Cardiac septum (tissue), 1 donor: ENCODE measurements at regions of chr6 and their contacts with region 1.

Region 1: DNA sequence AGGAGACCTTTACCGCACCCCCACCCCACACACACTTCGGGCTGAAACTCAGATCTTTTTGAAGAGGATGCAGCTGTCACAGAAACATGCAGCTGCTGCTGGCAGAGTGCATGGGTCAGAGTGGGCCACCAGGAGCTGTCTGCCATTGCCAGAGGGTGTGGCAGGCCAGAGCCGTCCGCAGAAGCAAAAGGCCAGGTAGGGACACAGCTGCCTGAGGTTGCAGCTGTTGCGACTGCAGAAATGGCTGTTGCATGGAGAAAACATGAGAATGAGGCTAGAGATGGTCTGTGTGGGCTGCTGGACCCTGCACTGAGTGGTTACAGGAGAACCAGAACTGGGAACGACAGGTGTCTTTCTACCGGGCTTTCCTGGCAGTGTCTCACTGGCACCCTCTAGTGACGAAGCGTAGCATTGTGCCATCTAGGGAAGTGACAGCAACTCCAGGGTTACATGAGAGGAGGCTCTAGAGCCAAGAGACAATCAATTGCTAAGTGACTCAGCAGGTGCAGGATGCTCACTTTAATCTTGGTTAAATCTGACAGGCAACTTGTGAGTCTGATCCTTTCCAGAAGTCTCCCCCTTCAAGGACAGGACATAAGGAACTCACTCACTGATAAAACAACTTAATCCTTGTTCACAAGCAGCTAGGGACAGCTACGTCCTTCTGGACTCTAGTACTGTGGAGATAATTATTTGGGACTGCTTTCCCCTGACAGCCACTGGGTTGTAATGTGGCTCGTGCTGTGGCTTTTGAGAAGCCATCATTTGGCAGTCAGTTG is 29.1 kb upstream of the SERPINB9 start:
- DNase-seq: peak; percentile 90

Region 2: GRCh38 chr6:2658788-2659187 is 273.4 kb before region 1 on chr6:
- intact Hi-C with region 1: no loop called
- DNase-seq: no peak

Region 3: GRCh38 chr6:2791124-2791974 is 140.8 kb before region 1 on chr6:
- intact Hi-C with region 1: loop called (anchors 5 kb)
- DNase-seq: peak; percentile 87

Region 4: GRCh38 chr6:2848851-2849250 is 83.3 kb before region 1 on chr6:
- intact Hi-C with region 1: loop called (anchors 1 kb)
- DNase-seq: no peak

Region 5: DNA sequence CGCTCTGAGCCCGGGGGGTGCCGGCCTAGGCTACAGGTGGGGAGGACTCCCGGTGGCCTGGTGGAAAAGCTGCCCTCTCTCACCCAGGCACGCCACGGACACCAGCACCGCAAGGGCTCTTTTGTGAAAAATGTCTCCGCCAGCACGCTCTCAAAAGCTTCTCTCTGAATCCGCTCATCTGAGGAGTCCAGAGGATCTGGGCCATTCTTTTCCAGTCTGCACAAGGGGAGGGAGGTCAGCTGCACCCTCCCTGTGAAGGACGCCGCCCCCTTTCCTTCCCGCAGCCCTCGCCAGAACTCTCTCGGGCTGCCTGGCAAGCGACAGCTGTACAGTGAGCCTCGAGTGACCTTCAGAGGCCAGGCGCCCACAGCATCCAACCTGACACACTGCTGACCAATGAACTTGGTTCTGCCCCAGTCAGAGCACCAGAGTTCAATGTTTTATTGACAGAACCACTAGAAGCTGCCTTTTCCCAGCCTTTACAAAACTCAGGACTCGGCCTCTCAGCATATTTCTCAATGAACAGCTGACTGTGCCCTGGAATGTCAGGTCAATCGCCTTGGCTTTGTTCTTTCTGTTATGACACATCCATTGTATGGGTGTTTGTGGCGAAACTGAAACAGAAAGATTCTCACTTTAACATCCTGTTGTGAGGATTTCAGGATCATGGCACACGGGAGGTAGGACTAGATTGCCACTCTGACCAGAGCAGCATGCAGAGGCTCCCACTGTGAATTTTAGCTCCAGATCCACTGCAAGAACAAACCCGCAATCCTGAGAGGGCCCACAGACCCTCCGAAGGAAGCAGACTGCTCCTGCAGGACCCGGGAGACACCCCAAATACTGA is 55.7 kb before region 1 on chr6:
- intact Hi-C with region 1: loop called (anchors 2 kb)
- DNase-seq: peak; percentile 84

Region 6: DNA sequence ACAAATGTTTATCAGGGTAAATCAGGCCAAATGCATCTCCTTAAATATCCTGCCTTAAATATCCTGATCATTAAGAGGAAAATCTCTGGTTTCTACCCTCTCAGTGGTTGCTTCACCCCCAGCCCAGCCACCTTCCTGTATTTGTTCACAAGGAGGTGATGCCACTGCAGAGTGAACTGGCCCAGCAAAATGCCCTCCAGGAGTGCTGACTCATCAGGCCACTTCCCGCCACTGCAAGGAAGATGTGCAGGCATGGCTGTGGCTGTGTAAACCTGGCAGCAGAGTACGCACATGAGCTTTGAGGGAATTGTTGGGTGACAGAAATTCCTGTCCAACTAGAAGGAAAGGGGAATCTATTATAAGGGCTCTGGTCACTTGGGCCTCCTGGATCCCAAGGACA is 81.3 kb after region 1 on chr6:
- intact Hi-C with region 1: no loop called
- DNase-seq: peak; percentile 94